H1 (cell line): ENCODE measurements at regions of chr11 and their contacts with region 1.

Region 1: GRCh38 chr11:134244655-134245054 is 8.5 kb downstream of the THYN1 start:
- DNase-seq: no peak
- H3K4me3 ChIP-seq: no peak overlapping the region
- H3K27ac ChIP-seq: no peak overlapping the region
- H3K4me1 ChIP-seq: no peaks in the 10 kb centered on the region
- H3K27me3 ChIP-seq: no peaks in the 10 kb centered on the region
- CTCF ChIP-seq: peak in 2 of 3 experiments; percentile 48 to 57; a peak in 2 of 4 replicates
- EP300 ChIP-seq: no peak
- POLR2A ChIP-seq: no peak
- RAD21 ChIP-seq: peak; percentile 22 to 23; a peak in 2 of 4 replicates

Region 2: DNA sequence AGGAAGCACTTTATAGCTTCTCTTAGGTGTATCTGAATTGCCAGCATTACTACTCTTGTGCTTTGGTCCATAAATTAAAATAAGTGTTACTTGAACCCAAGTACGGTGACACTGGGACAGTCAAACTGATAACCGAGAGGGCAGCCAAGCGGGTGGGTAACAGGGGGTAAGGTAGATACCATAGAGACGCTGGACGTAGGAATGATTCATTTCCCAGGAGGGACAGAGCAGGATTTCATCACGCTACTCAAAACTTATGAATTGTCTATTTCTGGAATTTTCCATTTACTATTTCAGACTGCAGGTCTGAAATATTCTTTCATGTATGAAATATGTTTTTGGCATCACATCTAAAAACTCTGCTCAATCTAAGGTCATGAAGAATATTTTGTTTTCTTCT is 384.5 kb before region 1 on chr11:
- CTCF ChIA-PET with region 1: no interaction called
- POLR2A ChIA-PET with region 1: no interaction called
- DNase-seq: no peak
- H3K4me3 ChIP-seq: no peak overlapping the region
- H3K27ac ChIP-seq: no peak overlapping the region
- H3K4me1 ChIP-seq: peaks cover 0 to under 1% (median 0%) of the 10 kb centered on the region in 4 experiments; a peak in 1 of 7 replicates
- H3K27me3 ChIP-seq: no peaks in the 10 kb centered on the region
- CTCF ChIP-seq: no peak
- EP300 ChIP-seq: no peak
- POLR2A ChIP-seq: no peak
- RAD21 ChIP-seq: no peak

Region 3: GRCh38 chr11:134207538-134208239 is 37.0 kb before region 1 on chr11:
- CTCF ChIA-PET with region 1: interaction called, 11 read pairs
- POLR2A ChIA-PET with region 1: no interaction called
- DNase-seq: peak in 1 of 2 experiments; percentile 82
- H3K4me3 ChIP-seq: no peak overlapping the region
- H3K27ac ChIP-seq: no peak overlapping the region
- H3K4me1 ChIP-seq: no peaks in the 10 kb centered on the region
- H3K27me3 ChIP-seq: no peaks in the 10 kb centered on the region
- CTCF ChIP-seq: peak; percentile 25 to 44 (median 41); a peak in 3 of 4 replicates
- EP300 ChIP-seq: no peak
- POLR2A ChIP-seq: no peak
- RAD21 ChIP-seq: 0 out of 4 replicates have a peak, but pooled peaks of 1 of the 2 experiments have one; percentile 12

Region 4: GRCh38 chr11:134223836-134224709 is 20.6 kb before region 1 on chr11 and contains the starts of genes NCAPD3 and VPS26B:
- CTCF ChIA-PET with region 1: interaction called, 23 read pairs
- POLR2A ChIA-PET with region 1: interaction called, 7 read pairs
- DNase-seq: peak; percentile 86 to 96
- H3K4me3 ChIP-seq: peak within 1 kb of the TSS; percentile 75 to 97 (median 86)
- H3K27ac ChIP-seq: no peak within 1 kb of the TSS
- H3K4me1 ChIP-seq: peaks cover 0 to 5% (median 3%) of the 10 kb centered on the region in 4 experiments
- H3K27me3 ChIP-seq: peaks cover 0 to 6% (median 0%) of the 10 kb centered on the region in 4 experiments; a peak in 1 of 7 replicates
- CTCF ChIP-seq: no peak; a peak in 1 of 4 replicates
- EP300 ChIP-seq: no peak
- POLR2A ChIP-seq: no peak; a peak in 1 of 3 replicates
- RAD21 ChIP-seq: no peak
- total RNA-seq, gene NCAPD3: 50.3 and 55.2 TPM in 2 replicates
- total RNA-seq, gene VPS26B: 26.8 and 27.0 TPM in 2 replicates